Right cardiac atrium (tissue), 5 donors: ENCODE measurements at regions of chr4 and their contacts with region 1.

Region 1: DNA sequence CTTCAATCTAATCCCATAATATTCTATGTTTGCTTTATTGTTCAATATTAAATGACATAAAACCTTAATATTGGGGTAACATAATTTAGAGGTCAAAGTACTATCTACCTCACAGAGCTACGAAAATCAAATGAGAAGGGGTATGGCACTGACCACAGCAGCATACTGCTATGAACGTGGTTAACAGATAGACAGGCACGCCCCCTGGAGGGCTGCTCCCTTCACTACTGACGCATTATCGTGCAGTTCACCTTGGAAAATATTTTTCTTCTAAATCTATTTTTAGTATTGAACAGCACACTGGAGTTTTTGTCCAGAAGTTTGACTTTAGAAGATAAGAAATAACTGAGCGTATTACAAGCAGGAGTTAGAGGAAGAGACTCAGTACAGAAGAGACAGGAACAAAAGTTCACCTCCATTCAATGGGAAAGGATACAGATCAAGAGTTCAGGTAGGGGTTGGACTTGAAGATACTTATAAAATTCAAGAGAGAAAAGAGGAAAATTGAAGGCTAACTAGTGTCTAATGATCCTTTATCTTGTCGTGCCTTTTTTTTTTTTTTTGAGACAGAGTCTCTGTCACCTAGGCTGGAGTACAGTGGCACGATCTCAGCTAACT is 22.7 kb downstream of the MAP9 start:
- DNase-seq: peak; percentile 73 to 93 (median 82)
- ATAC-seq: peak; percentile 81 to 89
- H3K4me3 ChIP-seq: no peak overlapping the region
- H3K27ac ChIP-seq: no peak overlapping the region
- H3K4me1 ChIP-seq: no peaks in the 10 kb centered on the region
- H3K27me3 ChIP-seq: no peaks in the 10 kb centered on the region

Region 2: GRCh38 chr4:154642373-154643009 is 711.5 kb before region 1 on chr4:
- intact Hi-C with region 1: no loop called
- DNase-seq: no peak
- ATAC-seq: no peak
- H3K4me3 ChIP-seq: no peak overlapping the region
- H3K27ac ChIP-seq: no peak overlapping the region
- H3K4me1 ChIP-seq: no peaks in the 10 kb centered on the region
- H3K27me3 ChIP-seq: no peaks in the 10 kb centered on the region

Region 3: DNA sequence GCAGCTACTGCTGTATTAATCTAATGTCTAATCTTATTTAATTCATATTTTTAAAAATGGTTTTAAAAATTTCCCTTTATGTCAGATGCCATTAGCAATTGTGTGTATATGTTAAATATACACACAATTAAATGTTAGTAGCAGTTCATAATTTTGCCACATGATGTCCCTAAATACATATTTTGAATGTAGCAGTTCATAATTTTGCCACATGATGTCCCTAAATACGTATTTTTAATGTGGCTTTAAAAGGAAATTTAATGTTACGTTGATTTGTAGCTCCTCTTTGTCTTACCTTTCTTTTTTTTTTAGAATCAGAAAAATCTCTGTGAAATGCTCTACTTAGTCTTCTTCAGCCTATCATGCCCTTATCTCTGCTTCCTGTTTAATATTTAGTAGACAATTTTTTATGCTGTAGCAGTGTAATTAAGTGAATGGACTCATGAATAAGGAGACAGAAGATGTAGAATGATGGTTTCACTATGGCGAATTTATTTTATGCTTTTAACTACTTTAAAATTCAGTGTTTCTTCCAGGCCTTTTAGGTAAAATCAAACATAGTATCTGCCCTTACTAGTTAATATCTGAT is 546.9 kb before region 1 on chr4:
- intact Hi-C with region 1: loop called in 1 of 4 experiments (anchors 5 kb)
- DNase-seq: no peak
- ATAC-seq: no peak
- H3K4me3 ChIP-seq: no peak overlapping the region
- H3K27ac ChIP-seq: no peak overlapping the region
- H3K4me1 ChIP-seq: no peaks in the 10 kb centered on the region
- H3K27me3 ChIP-seq: no peaks in the 10 kb centered on the region

Region 4: DNA sequence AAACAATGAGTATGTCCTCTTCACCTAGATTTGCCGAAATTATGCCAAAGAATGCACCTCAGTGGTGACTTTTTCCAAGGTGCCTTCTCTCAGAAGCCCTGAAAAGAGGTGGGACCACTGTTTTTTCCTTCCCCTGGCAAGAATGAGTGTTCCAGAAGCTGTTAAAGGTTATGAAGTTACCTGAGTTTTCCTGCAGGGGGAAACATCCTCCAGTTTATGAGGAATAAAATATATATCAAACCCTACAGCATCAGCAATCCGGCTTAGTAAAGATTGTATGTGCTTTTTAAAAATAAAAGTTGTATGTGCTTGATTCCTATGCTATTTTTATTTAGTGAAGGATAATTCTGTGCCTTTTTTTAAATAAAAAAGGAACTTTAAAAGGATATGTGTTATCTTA is 499.7 kb before region 1 on chr4:
- intact Hi-C with region 1: loop called in 1 of 4 experiments (anchors 5 kb)
- DNase-seq: no peak
- ATAC-seq: no peak
- H3K4me3 ChIP-seq: no peak overlapping the region
- H3K27ac ChIP-seq: no peak overlapping the region
- H3K4me1 ChIP-seq: no peaks in the 10 kb centered on the region
- H3K27me3 ChIP-seq: no peaks in the 10 kb centered on the region